Activated B cell treated with CpG ODN at 0.5 μM for 24 hours (primary cell): ENCODE measurements at regions of chr15 and their contacts with region 1.

Region 1: DNA sequence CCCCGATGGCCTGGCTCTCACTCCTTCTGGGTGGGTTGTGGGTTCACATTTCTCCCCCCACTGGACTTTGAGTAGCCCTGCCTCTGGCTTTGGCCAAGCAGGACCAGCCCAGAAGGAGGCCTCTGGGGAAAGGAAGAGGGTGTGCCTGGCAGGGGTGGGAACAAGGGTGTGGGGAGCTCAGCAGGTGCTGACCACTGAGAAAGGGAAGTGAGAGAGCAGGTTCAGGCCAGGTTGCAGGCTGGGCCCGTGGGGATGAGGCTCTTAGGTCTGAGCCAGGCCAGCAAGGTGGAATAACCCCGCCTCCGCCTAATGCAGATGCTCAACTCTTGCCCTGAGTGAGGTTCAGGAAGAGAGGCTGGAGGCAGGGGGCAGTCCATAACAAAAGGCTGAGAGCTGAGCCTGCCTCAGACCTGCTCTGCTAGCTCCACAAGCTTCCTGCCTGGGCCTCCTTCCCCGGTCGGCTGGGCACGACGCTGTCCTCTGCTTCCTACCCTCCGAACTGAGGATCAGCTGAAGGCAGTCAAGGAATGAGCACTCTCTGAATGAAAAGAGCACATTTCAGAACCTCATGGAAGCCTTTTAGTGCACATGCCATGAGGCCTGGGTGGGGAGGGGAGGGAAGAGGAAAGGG is 82.7 kb downstream of the TLE3 start:
- DNase-seq: peak; percentile 50
- ATAC-seq: peak; percentile 70
- H3K4me3 Mint-ChIP-seq: peak overlapping the region; percentile 58
- H3K27ac Mint-ChIP-seq: peak overlapping the region; percentile 77
- H3K4me1 Mint-ChIP-seq: peaks cover 84% of the 10 kb centered on the region
- H3K27me3 Mint-ChIP-seq: no peaks in the 10 kb centered on the region
- CTCF ChIP-seq: no peak

Region 2: GRCh38 chr15:69994429-69995201 is 20.4 kb before region 1 on chr15:
- CTCF ChIA-PET with region 1: no interaction called
- POLR2A ChIA-PET with region 1: interaction called, 3 read pairs
- intact Hi-C with region 1: loop called (anchors 2 kb)
- DNase-seq: no peak
- ATAC-seq: peak; percentile 81
- H3K4me3 Mint-ChIP-seq: peak overlapping the region; percentile 0
- H3K27ac Mint-ChIP-seq: peak overlapping the region; percentile 57
- H3K4me1 Mint-ChIP-seq: peaks cover 85% of the 10 kb centered on the region
- H3K27me3 Mint-ChIP-seq: no peaks in the 10 kb centered on the region
- CTCF ChIP-seq: no peak

Region 3: DNA sequence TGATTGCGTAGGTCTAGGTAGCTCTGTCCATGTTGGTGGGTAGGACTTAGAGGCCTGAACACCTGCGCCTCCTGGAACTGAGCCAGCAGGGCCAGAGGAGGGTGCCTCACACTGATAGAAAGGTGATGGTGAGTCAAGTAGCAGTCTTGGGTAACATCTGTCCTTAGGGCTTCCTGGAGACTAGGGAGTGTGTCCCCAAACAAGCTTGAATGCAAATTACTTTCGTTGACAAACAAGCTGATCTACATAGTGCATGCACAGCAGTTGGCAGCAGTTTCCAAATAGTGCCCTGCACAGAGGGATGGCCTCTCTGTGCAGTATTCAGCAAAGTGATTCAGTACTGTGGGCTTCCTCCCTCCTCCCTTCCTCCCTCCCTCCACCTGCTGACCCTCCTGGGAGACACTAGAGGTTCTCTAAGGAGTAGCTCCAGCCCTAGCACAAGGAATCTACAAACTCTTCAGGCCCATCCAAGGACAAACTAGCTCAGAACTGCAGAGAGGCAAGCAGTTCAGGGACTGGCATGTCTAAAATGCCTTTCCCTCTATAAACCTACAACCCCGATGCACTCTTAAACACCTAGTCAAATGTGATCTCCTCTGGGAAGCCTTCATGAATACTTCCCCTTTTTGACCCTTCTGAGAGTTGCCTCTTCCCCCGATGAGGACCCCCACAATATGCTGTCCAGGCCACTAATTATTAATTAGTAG is 21.8 kb after region 1 on chr15:
- CTCF ChIA-PET with region 1: no interaction called
- POLR2A ChIA-PET with region 1: interaction called, 13 read pairs
- intact Hi-C with region 1: loop called (anchors 1 kb)
- DNase-seq: no peak
- ATAC-seq: peak; percentile 55
- H3K4me3 Mint-ChIP-seq: peak overlapping the region; percentile 76
- H3K27ac Mint-ChIP-seq: peak overlapping the region; percentile 91
- H3K4me1 Mint-ChIP-seq: peaks cover 67% of the 10 kb centered on the region
- H3K27me3 Mint-ChIP-seq: no peaks in the 10 kb centered on the region
- CTCF ChIP-seq: no peak

Region 4: DNA sequence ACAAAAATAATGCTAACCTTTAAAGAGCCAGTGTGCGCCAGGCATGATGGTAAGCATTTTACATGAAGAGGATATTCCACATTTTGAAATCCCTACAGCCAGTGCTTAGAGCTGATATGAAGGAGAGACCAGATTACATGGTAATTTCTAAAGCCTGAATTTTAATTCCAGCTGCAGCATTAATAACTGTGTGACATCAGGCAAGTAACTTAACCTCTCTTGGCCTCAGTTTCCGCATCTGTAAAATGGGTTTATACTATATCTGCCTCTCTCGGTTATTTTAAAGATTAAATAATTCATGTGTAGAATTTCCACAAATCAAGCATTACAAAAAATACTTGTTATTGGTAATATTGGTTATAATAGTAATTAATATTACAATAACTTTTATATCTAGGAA is 583.0 kb after region 1 on chr15:
- CTCF ChIA-PET with region 1: no interaction called
- POLR2A ChIA-PET with region 1: interaction called, 17 read pairs
- intact Hi-C with region 1: no loop called
- DNase-seq: no peak
- ATAC-seq: no peak
- H3K4me3 Mint-ChIP-seq: no peak overlapping the region
- H3K27ac Mint-ChIP-seq: no peak overlapping the region
- H3K4me1 Mint-ChIP-seq: no peaks in the 10 kb centered on the region
- H3K27me3 Mint-ChIP-seq: peaks cover 23% of the 10 kb centered on the region
- CTCF ChIP-seq: no peak